Activated CD4-positive, alpha-beta memory T cell treated with anti-CD3 and anti-CD28 coated beads for 36 hours (primary cell): ENCODE measurements at regions of chr1 and their contacts with region 1.

Region 1: DNA sequence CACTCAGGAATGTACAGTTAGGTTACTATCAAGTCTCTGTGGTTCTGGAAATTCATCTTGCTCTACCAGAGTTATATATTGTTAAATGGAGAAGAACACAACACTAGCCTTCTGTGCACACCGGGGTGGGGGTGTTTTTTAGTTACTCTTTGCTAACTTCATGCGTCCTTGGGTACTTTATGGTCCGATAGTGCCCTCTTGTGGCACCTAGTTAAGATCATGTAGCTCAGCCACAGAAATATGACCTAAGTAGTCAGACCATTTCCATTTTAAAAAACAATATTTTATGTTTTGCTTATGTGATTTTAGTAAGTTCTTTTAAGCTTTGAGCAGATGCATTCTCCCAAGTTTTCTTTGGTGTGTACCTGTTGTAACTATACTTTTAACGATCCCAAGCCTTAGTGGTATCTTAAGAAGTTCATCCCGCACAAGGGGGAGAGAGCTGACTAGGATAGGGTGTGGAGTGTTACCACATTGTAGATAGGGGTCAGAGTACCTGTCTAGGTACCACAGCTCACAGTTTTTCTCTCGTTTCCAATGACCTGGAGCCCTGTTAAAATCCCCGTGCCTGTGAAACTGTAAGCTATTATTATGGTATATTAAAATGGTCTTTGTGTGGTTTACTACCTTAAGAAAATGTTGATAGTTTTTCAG is 20.6 kb upstream of the SH3D21 start:
- DNase-seq: peak; percentile 68
- H3K4me3 Mint-ChIP-seq: no peak overlapping the region
- H3K27ac Mint-ChIP-seq: peak overlapping the region; percentile 80
- H3K4me1 Mint-ChIP-seq: peaks cover 36% of the 10 kb centered on the region
- H3K27me3 Mint-ChIP-seq: no peaks in the 10 kb centered on the region

Region 2: GRCh38 chr1:36099681-36100341 is 185.8 kb before region 1 on chr1:
- CTCF ChIA-PET with region 1: interaction called, 11 read pairs
- POLR2A ChIA-PET with region 1: no interaction called
- intact Hi-C with region 1: loop called (anchors 5 kb)
- DNase-seq: peak; percentile 84
- H3K4me3 Mint-ChIP-seq: no peak overlapping the region
- H3K27ac Mint-ChIP-seq: no peak overlapping the region
- H3K4me1 Mint-ChIP-seq: no peaks in the 10 kb centered on the region
- H3K27me3 Mint-ChIP-seq: no peaks in the 10 kb centered on the region

Region 3: DNA sequence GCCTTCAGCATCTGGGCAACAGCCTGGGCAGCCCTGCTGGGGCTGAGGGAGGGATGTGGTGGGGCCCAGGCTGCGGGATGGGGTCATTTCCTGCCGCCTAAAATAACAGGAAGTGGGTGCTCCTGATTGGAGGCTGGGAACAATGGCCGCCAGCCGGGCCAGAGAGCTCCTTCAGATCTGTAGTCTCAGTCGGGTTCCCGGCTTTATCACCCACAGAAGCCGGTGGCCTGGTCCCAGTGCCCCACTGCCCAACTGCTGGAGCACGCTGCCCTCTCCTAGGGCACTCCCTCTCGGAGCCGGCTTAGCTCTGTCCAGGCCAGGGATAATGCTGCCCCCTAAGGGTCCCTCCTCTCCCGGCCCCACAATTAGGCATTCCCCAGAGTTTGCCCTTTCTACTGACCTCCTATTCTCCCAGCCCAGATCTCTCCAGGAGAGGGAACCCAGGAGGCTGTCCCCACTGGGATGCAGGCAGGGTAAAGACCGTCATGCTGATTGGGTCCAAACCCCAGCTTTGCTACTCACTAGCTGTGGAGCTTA is 124.6 kb before region 1 on chr1:
- CTCF ChIA-PET with region 1: interaction called, 23 read pairs
- POLR2A ChIA-PET with region 1: interaction called, 7 read pairs
- intact Hi-C with region 1: no loop called
- DNase-seq: peak; percentile 88
- H3K4me3 Mint-ChIP-seq: peak overlapping the region; percentile 72
- H3K27ac Mint-ChIP-seq: peak overlapping the region; percentile 95
- H3K4me1 Mint-ChIP-seq: peaks cover 59% of the 10 kb centered on the region
- H3K27me3 Mint-ChIP-seq: no peaks in the 10 kb centered on the region

Region 4: GRCh38 chr1:36300526-36300925 is 15.0 kb after region 1 on chr1:
- CTCF ChIA-PET with region 1: interaction called, 45 read pairs
- POLR2A ChIA-PET with region 1: interaction called, 9 read pairs
- intact Hi-C with region 1: no loop called
- DNase-seq: peak; percentile 44
- H3K4me3 Mint-ChIP-seq: peak overlapping the region; percentile 3
- H3K27ac Mint-ChIP-seq: peak overlapping the region; percentile 95
- H3K4me1 Mint-ChIP-seq: peaks cover 61% of the 10 kb centered on the region
- H3K27me3 Mint-ChIP-seq: no peaks in the 10 kb centered on the region